Lower lobe of right lung (tissue), 2 donors: ENCODE measurements at regions of chr1 and their contacts with region 1.

Region 1: GRCh38 chr1:43912607-43913006 is 21.0 kb upstream of the ARTN start:
- DNase-seq: no peak
- ATAC-seq: peak in 1 of 2 donors; percentile 39
- H3K4me3 ChIP-seq: no peak overlapping the region
- H3K27ac ChIP-seq: no peak overlapping the region
- H3K4me1 ChIP-seq: no peaks in the 10 kb centered on the region
- H3K27me3 ChIP-seq: no peaks in the 10 kb centered on the region
- CTCF ChIP-seq: no peak

Region 2: DNA sequence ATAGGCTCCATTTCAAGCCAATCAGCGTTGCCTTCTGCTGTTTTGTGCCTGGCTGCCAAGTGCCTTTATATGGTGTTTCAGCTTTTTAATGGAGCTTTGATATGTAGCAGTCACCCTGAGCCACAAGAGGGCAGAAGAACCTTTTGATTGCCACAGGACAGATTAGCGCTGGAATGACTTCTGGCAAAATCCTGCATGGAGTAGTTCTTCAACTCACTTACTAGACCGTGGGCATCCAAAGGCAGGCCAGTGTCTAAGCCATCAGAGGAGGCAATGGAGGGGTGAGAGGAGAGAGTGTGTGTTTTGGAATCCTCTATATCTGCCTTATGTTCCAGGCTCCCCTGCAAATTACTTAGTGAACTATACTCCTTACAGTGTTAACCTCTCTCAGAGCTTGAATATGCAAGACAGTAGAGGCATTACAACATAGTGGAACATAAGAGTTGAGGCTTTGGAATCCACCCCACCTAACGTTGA is 149.1 kb before region 1 on chr1:
- intact Hi-C with region 1: loop called (anchors 10 kb)
- DNase-seq: no peak
- ATAC-seq: peak; percentile 92 to 96
- H3K4me3 ChIP-seq: no peak overlapping the region
- H3K27ac ChIP-seq: no peak overlapping the region
- H3K4me1 ChIP-seq: peaks cover 13% of the 10 kb centered on the region
- H3K27me3 ChIP-seq: no peaks in the 10 kb centered on the region
- CTCF ChIP-seq: peak; percentile 85

Region 3: DNA sequence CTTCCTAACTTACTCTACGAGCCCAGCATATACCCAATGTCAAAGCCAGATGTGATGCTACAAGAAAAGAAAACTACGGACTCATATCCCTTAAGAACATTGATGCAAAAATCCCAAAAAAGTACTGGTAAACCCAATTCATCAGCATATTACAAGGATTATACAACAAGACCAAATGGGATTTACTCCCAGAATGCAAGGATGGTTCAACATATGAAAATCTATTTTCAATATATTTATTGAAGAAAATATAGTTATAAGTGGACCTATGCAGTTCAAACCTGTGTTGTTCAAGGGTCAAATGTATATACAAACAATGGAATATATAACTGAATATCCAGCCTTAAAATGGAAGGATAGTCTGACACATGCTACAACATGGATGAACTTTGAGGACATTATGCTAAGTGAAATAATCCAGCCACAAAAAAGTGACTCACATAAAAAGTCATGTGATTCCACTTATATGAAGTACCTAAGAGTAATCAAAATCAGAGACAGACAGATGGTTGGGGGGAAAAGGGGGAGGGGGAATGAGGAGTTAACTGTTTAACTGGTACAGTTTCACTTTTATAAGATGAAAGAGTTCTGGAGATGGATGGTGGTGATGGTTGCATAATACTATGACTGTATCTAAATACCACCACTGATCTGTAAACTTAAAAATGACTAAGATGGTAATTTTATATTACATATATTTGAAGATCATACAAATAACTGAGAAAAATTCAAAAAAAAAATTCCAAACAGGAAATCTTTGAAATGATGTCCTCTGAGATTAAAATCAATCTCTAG is 232.6 kb after region 1 on chr1:
- intact Hi-C with region 1: no loop called
- DNase-seq: no peak
- ATAC-seq: no peak
- H3K4me3 ChIP-seq: no peak overlapping the region
- H3K27ac ChIP-seq: no peak overlapping the region
- H3K4me1 ChIP-seq: no peaks in the 10 kb centered on the region
- H3K27me3 ChIP-seq: no peaks in the 10 kb centered on the region
- CTCF ChIP-seq: no peak